CD4-positive, alpha-beta memory T cell (primary cell): ENCODE measurements at regions of chr6 and their contacts with region 1.

Region 1: GRCh38 chr6:28136585-28137504 is 4.8 kb upstream of the ZKSCAN8 start:
- DNase-seq: peak; percentile 54 to 76 (median 62)
- H3K4me3 ChIP-seq: peak overlapping the region; percentile 64 to 96
- H3K4me3 Mint-ChIP-seq: peak overlapping the region; percentile 92 to 99 (median 94)
- H3K27ac ChIP-seq: peak overlapping the region; percentile 98
- H3K27ac Mint-ChIP-seq: peak overlapping the region; percentile 95 to 100 (median 98)
- H3K4me1 ChIP-seq: peaks cover 51% of the 10 kb centered on the region
- H3K4me1 Mint-ChIP-seq: peaks cover 52 to 88% (median 68%) of the 10 kb centered on the region in 4 donors
- H3K27me3 ChIP-seq: no peaks in the 10 kb centered on the region
- H3K27me3 Mint-ChIP-seq: no peaks in the 10 kb centered on the region

Region 2: DNA sequence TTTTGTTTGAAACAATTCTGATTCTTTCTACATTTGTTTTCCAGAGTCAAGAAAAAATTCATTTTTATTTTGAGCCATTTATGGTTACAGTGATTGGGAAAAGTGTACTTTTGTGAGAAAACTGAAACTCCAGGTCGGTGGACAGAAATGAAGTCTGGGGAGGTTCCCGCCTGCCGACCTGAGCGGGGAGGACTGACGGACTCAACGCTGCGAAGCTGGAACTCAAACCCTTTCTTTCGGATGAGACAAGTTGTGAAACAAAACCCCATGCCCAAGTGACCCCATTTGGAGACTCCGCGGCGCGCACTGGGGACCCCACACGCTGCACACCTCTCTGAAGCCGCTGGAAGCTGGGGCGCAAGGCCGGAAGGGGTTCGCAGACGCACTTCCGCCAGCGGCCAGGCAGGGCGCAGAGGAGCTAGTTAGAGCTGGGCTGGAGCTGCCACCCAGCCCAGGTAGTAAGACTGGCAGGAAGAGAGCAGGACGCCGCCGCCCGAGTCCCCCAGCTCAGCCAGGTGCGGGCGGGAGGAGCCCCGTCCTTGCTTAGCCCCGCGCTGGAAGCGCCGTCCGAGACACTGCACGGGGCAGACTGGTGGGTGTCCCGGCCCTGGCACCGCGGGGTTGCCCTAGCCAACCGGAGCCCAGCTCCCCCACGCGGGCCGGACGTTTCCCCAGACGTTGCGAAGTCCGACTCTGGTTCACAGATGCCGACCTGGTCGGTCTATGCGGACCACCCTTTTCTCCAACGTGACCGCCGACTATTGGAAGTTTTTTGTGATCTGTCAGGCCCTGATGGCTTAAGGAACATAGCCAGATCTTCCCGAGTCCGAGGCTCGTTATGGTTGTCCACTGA is 32.2 kb before region 1 on chr6:
- CTCF ChIA-PET with region 1: interaction called, 19 read pairs
- POLR2A ChIA-PET with region 1: interaction called, 40 read pairs
- intact Hi-C with region 1: loop called (anchors 1 kb)
- DNase-seq: peak; percentile 79 to 83 (median 82)
- H3K4me3 ChIP-seq: peak overlapping the region; percentile 59 to 67
- H3K4me3 Mint-ChIP-seq: peak overlapping the region; percentile 85 to 96 (median 92)
- H3K27ac ChIP-seq: peak overlapping the region; percentile 72
- H3K27ac Mint-ChIP-seq: peak overlapping the region; percentile 80 to 97 (median 93)
- H3K4me1 ChIP-seq: peaks cover 13% of the 10 kb centered on the region
- H3K4me1 Mint-ChIP-seq: peaks cover 3 to 17% (median 11%) of the 10 kb centered on the region in 4 donors
- H3K27me3 ChIP-seq: no peaks in the 10 kb centered on the region
- H3K27me3 Mint-ChIP-seq: peaks cover 3 to 11% of the 10 kb centered on the region in 2 donors

Region 3: GRCh38 chr6:28124102-28124970 is 12.5 kb before region 1 on chr6 and contains the start of gene ZSCAN16:
- CTCF ChIA-PET with region 1: interaction called, 8 read pairs
- POLR2A ChIA-PET with region 1: interaction called, 132 read pairs
- intact Hi-C with region 1: loop called (anchors 1 kb)
- DNase-seq: peak; percentile 63 to 79 (median 68)
- H3K4me3 ChIP-seq: peak within 1 kb of the TSS; percentile 70 to 74
- H3K4me3 Mint-ChIP-seq: peak within 1 kb of the TSS; percentile 93 to 98 (median 95)
- H3K27ac ChIP-seq: peak within 1 kb of the TSS; percentile 84
- H3K27ac Mint-ChIP-seq: peak within 1 kb of the TSS; percentile 96 to 99 (median 98)
- H3K4me1 ChIP-seq: peaks cover 24% of the 10 kb centered on the region
- H3K4me1 Mint-ChIP-seq: peaks cover 36 to 52% (median 48%) of the 10 kb centered on the region in 4 donors
- H3K27me3 ChIP-seq: no peaks in the 10 kb centered on the region
- H3K27me3 Mint-ChIP-seq: no peaks in the 10 kb centered on the region
- total RNA-seq, gene ZSCAN16: 13.4 to 14.8 TPM

Region 4: DNA sequence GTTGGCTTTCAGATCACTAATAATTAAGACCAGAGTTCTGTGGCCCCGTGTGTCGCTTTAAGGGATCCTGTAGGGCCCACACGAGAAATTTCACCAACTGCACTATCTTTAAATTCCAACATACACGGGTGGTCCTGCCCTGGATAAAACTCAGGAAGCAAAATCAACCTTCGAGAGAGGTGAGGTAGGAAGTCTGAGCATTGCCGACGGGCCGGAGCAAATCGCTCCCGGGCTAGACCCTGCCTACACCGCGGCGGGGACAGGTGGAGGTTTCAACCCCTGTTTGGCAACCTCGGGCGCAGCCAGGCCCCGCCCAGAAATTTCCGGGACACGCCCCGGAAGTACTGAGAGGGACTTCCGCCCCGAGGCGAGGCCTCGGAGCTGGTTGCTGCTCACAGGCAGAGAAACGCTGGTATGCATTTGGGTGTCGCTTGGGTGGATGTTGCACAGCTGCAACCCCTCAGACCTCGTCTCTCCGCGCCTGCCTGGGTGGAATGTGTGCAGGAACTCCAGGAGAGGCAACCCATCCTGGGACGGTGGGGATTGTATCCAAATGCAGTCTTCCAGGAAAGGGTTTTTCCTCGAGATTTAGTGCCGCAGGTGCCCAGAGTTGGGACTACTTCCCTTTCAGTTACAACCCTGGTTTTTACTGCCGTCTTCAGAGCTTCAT is 24.7 kb after region 1 on chr6:
- CTCF ChIA-PET with region 1: no interaction called
- POLR2A ChIA-PET with region 1: interaction called, 10 read pairs
- intact Hi-C with region 1: no loop called
- DNase-seq: peak; percentile 77 to 84 (median 81)
- H3K4me3 ChIP-seq: peak overlapping the region in 1 of 2 donors; percentile 48
- H3K4me3 Mint-ChIP-seq: peak overlapping the region; percentile 63 to 84 (median 80)
- H3K27ac ChIP-seq: no peak overlapping the region
- H3K27ac Mint-ChIP-seq: peak overlapping the region in 4 of 7 donors; percentile 33 to 70 (median 64)
- H3K4me1 ChIP-seq: peaks cover 9% of the 10 kb centered on the region
- H3K4me1 Mint-ChIP-seq: peaks cover 6 to 18% (median 15%) of the 10 kb centered on the region in 4 donors
- H3K27me3 ChIP-seq: no peaks in the 10 kb centered on the region
- H3K27me3 Mint-ChIP-seq: peaks cover 0 to 4% of the 10 kb centered on the region in 2 donors

Region 5: DNA sequence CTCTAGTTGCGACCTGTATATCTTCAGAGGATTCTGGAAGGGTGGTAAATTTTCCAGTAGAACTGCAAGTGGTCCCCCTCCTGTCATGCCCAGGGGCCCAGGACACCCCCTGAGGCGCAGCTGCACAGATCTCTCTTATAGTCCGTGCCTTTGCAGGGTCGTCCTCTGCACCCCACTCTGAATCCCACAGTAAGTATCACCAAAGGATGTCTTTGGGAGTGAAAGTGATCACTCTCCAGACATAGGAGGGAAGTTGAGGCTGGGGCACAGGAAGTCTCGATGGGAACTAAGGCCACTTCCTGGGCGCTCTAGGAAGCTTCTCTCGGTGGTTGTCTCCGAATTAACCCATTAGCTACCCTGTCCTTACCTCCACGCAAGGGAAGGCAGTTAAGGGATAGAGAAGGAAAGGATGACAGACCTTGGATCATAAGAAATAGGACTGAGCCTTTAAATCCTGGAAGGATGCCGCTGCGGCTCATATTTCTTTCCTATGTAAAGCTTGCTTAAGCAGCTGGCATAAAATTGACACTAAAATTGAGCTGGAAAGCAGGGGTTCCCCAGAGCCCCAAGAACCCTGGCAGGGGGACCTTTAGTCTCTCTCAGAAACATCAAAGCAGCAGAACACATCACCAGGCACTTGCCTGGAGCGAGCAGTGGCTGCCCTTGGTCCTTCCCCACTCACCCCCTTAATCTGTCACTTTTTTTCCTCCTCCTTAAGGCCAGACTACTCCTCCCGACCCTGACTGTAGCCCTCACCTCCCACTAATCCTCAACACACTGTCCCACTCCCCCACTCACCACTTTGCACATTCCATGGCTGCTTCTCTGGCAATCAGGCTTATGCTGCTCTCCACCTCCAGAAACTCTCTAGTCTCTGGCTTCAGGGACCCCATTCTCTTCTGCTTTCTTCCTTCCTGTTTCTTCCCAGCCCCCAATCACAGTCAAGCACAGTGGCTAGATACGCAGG is 115.4 kb after region 1 on chr6 and contains the start of gene ZKSCAN4:
- CTCF ChIA-PET with region 1: interaction called, 11 read pairs
- POLR2A ChIA-PET with region 1: interaction called, 21 read pairs
- intact Hi-C with region 1: loop called (anchors 1 kb)
- DNase-seq: peak; percentile 79 to 82 (median 80)
- H3K4me3 ChIP-seq: peak within 1 kb of the TSS; percentile 98 to 99
- H3K4me3 Mint-ChIP-seq: peak within 1 kb of the TSS; percentile 94 to 99 (median 97)
- H3K27ac ChIP-seq: peak within 1 kb of the TSS; percentile 52
- H3K27ac Mint-ChIP-seq: peak within 1 kb of the TSS; percentile 75 to 95 (median 89)
- H3K4me1 ChIP-seq: peaks cover 22% of the 10 kb centered on the region
- H3K4me1 Mint-ChIP-seq: peaks cover 22 to 38% (median 31%) of the 10 kb centered on the region in 4 donors
- H3K27me3 ChIP-seq: no peaks in the 10 kb centered on the region
- H3K27me3 Mint-ChIP-seq: no peaks in the 10 kb centered on the region
- total RNA-seq, gene ZKSCAN4: 9.9 to 11.1 TPM

Region 6: GRCh38 chr6:28266962-28267694 is 130.3 kb after region 1 on chr6 and contains the start of gene ZSCAN26:
- CTCF ChIA-PET with region 1: interaction called, 4 read pairs
- POLR2A ChIA-PET with region 1: interaction called, 53 read pairs
- intact Hi-C with region 1: loop called (anchors 5 kb)
- DNase-seq: peak; percentile 86 to 90 (median 88)
- H3K4me3 ChIP-seq: peak within 1 kb of the TSS; percentile 90 to 94
- H3K4me3 Mint-ChIP-seq: peak within 1 kb of the TSS in 1 of 8 donors; percentile 12
- H3K27ac ChIP-seq: peak within 1 kb of the TSS; percentile 70
- H3K27ac Mint-ChIP-seq: no peak within 1 kb of the TSS
- H3K4me1 ChIP-seq: peaks cover 18% of the 10 kb centered on the region
- H3K4me1 Mint-ChIP-seq: peaks cover 4 to 15% (median 11%) of the 10 kb centered on the region in 4 donors
- H3K27me3 ChIP-seq: no peaks in the 10 kb centered on the region
- H3K27me3 Mint-ChIP-seq: peaks cover 0 to under 1% of the 10 kb centered on the region in 2 donors
- total RNA-seq, gene ZSCAN26: 23.3 to 26.5 TPM

Region 7: DNA sequence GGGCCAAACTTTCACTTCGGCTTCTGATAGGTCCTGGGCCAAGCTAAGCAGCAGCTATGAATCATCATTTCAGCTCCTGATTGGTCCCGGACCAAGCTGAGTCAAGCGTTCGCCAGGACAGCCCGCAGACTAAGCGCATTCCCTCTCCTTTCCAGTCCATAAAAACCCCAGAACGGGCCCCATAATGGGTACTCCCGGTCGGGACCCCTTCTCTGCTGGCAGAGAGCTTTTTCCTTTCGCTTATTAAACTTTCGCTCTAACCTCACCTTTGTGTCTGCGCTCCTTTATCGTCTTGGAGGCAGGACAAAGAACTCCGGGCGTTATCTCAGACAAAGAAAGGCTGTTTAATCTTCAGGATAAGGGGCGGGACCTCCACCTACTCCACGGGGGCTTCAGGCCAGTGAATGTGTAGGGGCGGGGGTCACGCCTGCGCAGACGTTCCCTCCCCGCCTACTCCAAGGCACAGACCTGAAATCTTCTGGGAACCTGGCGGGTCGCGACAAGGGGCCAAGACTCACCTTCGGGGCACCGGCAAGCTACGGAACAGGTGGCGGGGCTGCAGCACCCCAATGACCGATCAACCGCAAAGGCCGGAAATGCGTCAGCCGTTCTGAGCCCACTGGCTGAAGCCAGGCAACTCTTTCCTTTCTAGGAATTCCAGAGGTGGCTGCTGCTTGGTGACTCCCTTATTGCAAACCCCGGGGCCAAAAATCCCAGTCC is 198.9 kb after region 1 on chr6 and contains the start of gene ZSCAN31:
- CTCF ChIA-PET with region 1: no interaction called
- POLR2A ChIA-PET with region 1: interaction called, 27 read pairs
- intact Hi-C with region 1: no loop called
- DNase-seq: peak; percentile 77 to 93 (median 81)
- H3K4me3 ChIP-seq: peak within 1 kb of the TSS; percentile 61 to 85
- H3K4me3 Mint-ChIP-seq: peak within 1 kb of the TSS in 1 of 8 donors; percentile 34
- H3K27ac ChIP-seq: peak within 1 kb of the TSS; percentile 87
- H3K27ac Mint-ChIP-seq: peak within 1 kb of the TSS in 1 of 7 donors; percentile 68
- H3K4me1 ChIP-seq: peaks cover 17% of the 10 kb centered on the region
- H3K4me1 Mint-ChIP-seq: peaks cover 0 to 4% (median 3%) of the 10 kb centered on the region in 4 donors
- H3K27me3 ChIP-seq: no peaks in the 10 kb centered on the region
- H3K27me3 Mint-ChIP-seq: peaks cover 0 to 3% of the 10 kb centered on the region in 2 donors
- total RNA-seq, gene ZSCAN31: 0.73 to 0.97 TPM